CD14-positive monocyte (primary cell): ENCODE measurements at regions of chr12 and their contacts with region 1.

Region 1: GRCh38 chr12:6867413-6868210 is at the start of gene TPI1:
- DNase-seq: peak; percentile 86 to 88 (median 86)
- H3K4me3 ChIP-seq: peak within 1 kb of the TSS; percentile 76 to 97 (median 86)
- H3K4me3 Mint-ChIP-seq: peak within 1 kb of the TSS; percentile 92 to 95
- H3K27ac ChIP-seq: peak within 1 kb of the TSS; percentile 63 to 86
- H3K27ac Mint-ChIP-seq: peak within 1 kb of the TSS; percentile 82 to 95 (median 92)
- H3K4me1 ChIP-seq: peaks cover 36 to 56% of the 10 kb centered on the region in 2 donors
- H3K4me1 Mint-ChIP-seq: peaks cover 52% of the 10 kb centered on the region
- H3K27me3 ChIP-seq: no peaks in the 10 kb centered on the region
- H3K27me3 Mint-ChIP-seq: peaks cover 0 to 5% (median 3%) of the 10 kb centered on the region in 3 donors
- CTCF ChIP-seq: peak; percentile 15
- polyA plus RNA-seq, gene TPI1: 446 to 839 (median 764) TPM

Region 2: DNA sequence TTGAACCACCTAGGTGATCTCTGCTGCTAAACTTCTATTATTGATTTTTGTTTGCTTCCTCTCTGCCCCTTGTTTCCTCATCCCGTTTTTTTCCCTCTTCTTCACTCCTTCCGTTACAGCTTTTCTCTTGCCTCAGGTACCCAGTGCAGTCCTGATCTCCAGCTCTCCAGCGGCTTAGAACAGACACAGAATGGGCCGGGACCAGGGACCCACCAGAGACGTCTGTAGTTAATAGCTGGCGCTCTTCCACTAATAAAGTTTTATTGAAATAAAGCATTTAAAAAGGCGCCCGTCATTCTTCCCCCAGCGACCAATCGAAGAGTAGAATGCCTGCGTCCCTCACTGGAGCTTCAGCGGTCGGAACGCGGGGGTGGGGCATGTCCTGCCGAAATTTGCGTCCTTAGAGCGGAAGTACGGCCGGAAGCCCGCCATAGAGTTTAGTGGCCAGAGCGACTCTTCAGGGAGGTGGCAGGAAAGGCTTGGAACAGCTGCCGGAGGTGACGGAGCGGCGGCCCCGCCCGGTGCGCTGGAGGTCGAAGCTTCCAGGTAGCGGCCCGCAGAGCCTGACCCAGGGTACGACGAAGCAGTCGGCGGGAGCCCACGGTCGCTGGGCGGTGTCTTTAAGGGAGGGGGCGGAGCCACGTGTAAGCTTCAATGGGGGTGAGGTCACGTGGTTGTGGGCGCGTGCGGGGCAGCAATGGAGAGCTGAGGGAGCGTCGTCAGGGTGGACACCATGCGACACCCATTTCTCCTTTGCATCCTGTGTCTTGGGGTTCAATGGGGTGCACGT is 143.8 kb before region 1 on chr12 and contains the start of gene COPS7A:
- intact Hi-C with region 1: no loop called
- DNase-seq: peak; percentile 91 to 96 (median 94)
- H3K4me3 ChIP-seq: peak within 1 kb of the TSS; percentile 52 to 85 (median 81)
- H3K4me3 Mint-ChIP-seq: peak within 1 kb of the TSS; percentile 93 to 99
- H3K27ac ChIP-seq: peak within 1 kb of the TSS; percentile 97 to 98
- H3K27ac Mint-ChIP-seq: peak within 1 kb of the TSS; percentile 93 to 99 (median 98)
- H3K4me1 ChIP-seq: peaks cover 14 to 17% of the 10 kb centered on the region in 2 donors
- H3K4me1 Mint-ChIP-seq: peaks cover 18% of the 10 kb centered on the region
- H3K27me3 ChIP-seq: no peaks in the 10 kb centered on the region
- H3K27me3 Mint-ChIP-seq: peaks cover 0 to 3% (median 1%) of the 10 kb centered on the region in 3 donors
- CTCF ChIP-seq: no peak
- polyA plus RNA-seq, gene COPS7A: 70.1 to 77.1 (median 72.3) TPM

Region 3: GRCh38 chr12:7108796-7109571 is 241.4 kb after region 1 on chr12 and contains the start of gene C1RL:
- intact Hi-C with region 1: loop called (anchors 2 to 5 kb)
- DNase-seq: peak; percentile 75 to 87 (median 85)
- H3K4me3 ChIP-seq: peak within 1 kb of the TSS; percentile 60 to 85 (median 79)
- H3K4me3 Mint-ChIP-seq: peak within 1 kb of the TSS; percentile 86 to 95
- H3K27ac ChIP-seq: peak within 1 kb of the TSS; percentile 72 to 77
- H3K27ac Mint-ChIP-seq: peak within 1 kb of the TSS; percentile 88 to 97 (median 92)
- H3K4me1 ChIP-seq: peaks cover 18 to 19% of the 10 kb centered on the region in 2 donors
- H3K4me1 Mint-ChIP-seq: peaks cover 33% of the 10 kb centered on the region
- H3K27me3 ChIP-seq: no peaks in the 10 kb centered on the region
- H3K27me3 Mint-ChIP-seq: peaks cover 0 to 2% (median 0%) of the 10 kb centered on the region in 3 donors
- CTCF ChIP-seq: peak; percentile 95
- polyA plus RNA-seq, gene C1RL: 4.8 to 27.9 (median 5.6) TPM